ENCODE measurements at regions of chr11 and their contacts with region 1.

Region 1: GRCh38 chr11:102287964-102288724 is 29.1 kb upstream of the BIRC3 start:
- DNase-seq: peak in 1 of 2 donors; percentile 55
- ATAC-seq: peak; percentile 74 to 92 (median 86)
- H3K4me3 ChIP-seq: peak overlapping the region in 5 of 10 donors; percentile 27 to 38 (median 28)
- H3K27ac ChIP-seq: no peak overlapping the region
- H3K4me1 ChIP-seq: peaks cover 0 to 16% (median 4%) of the 10 kb centered on the region in 9 donors
- H3K27me3 ChIP-seq: no peaks in the 10 kb centered on the region
- CTCF ChIP-seq: peak; percentile 36 to 85 (median 77)

Region 2: GRCh38 chr11:101817581-101817980 is 470.6 kb before region 1 on chr11:
- intact Hi-C with region 1: no loop called
- DNase-seq: no peak
- ATAC-seq: peak in 1 of 8 donors; percentile 63
- H3K4me3 ChIP-seq: no peak overlapping the region
- H3K27ac ChIP-seq: peak overlapping the region in 2 of 10 donors; percentile 20 to 22
- H3K4me1 ChIP-seq: peaks cover 0 to 9% (median 0%) of the 10 kb centered on the region in 9 donors
- H3K27me3 ChIP-seq: no peaks in the 10 kb centered on the region
- CTCF ChIP-seq: no peak

Region 3: GRCh38 chr11:102332611-102332994 is 44.5 kb after region 1 on chr11:
- intact Hi-C with region 1: loop called in 1 of 10 experiments (anchors 10 kb)
- DNase-seq: no peak
- ATAC-seq: no peak
- H3K4me3 ChIP-seq: no peak overlapping the region
- H3K27ac ChIP-seq: no peak overlapping the region
- H3K4me1 ChIP-seq: no peaks in the 10 kb centered on the region
- H3K27me3 ChIP-seq: no peaks in the 10 kb centered on the region
- CTCF ChIP-seq: no peak

Region 4: DNA sequence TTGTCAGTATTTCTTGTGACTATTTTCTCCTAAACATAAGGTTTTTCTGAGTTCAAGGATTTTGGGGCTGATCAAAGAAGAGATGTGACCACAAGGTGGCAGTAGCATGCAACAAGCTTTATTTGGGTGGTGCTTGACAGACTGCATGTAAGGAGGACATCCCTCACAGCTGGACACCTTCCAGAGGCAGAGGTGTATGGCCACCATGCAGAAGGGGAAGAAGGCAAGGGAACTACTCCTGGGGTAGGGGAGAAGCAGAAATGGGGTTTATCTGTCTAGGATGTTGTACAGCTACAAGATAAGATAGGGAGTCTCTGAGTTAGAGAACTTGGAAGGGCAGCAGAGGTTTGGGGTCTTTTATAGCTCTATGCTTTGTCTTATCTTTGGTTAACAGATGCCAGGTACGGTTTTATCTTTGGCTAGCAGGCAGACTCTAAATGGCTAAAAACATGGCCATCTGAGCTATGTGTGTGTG is 53.7 kb after region 1 on chr11:
- intact Hi-C with region 1: loop called in 6 of 10 experiments (anchors 2 to 10 kb)
- DNase-seq: peak; percentile 24 to 82
- ATAC-seq: peak; percentile 43 to 74 (median 63)
- H3K4me3 ChIP-seq: no peak overlapping the region
- H3K27ac ChIP-seq: no peak overlapping the region
- H3K4me1 ChIP-seq: peaks cover 0 to 12% (median 8%) of the 10 kb centered on the region in 9 donors
- H3K27me3 ChIP-seq: no peaks in the 10 kb centered on the region
- CTCF ChIP-seq: peak; percentile 58 to 88 (median 83)

Region 5: GRCh38 chr11:102346748-102347461 is 58.8 kb after region 1 on chr11 and contains the start of gene BIRC2:
- intact Hi-C with region 1: loop called in 5 of 10 experiments (anchors 2 to 5 kb)
- DNase-seq: peak; percentile 93 to 97
- ATAC-seq: peak; percentile 97 to 99 (median 98)
- H3K4me3 ChIP-seq: peak within 1 kb of the TSS; percentile 55 to 94 (median 86)
- H3K27ac ChIP-seq: peak within 1 kb of the TSS; percentile 93 to 99 (median 98)
- H3K4me1 ChIP-seq: peaks cover 0 to 38% (median 32%) of the 10 kb centered on the region in 9 donors
- H3K27me3 ChIP-seq: no peaks in the 10 kb centered on the region
- CTCF ChIP-seq: peak; percentile 34 to 87 (median 81)
- total RNA-seq, gene BIRC2: 25.4 to 39.7 (median 28.6) TPM

Measured in heart right ventricle (tissue), 16 donors.